Endothelial cell of umbilical vein (primary cell): ENCODE measurements at regions of chr19 and their contacts with region 1.

Region 1: DNA sequence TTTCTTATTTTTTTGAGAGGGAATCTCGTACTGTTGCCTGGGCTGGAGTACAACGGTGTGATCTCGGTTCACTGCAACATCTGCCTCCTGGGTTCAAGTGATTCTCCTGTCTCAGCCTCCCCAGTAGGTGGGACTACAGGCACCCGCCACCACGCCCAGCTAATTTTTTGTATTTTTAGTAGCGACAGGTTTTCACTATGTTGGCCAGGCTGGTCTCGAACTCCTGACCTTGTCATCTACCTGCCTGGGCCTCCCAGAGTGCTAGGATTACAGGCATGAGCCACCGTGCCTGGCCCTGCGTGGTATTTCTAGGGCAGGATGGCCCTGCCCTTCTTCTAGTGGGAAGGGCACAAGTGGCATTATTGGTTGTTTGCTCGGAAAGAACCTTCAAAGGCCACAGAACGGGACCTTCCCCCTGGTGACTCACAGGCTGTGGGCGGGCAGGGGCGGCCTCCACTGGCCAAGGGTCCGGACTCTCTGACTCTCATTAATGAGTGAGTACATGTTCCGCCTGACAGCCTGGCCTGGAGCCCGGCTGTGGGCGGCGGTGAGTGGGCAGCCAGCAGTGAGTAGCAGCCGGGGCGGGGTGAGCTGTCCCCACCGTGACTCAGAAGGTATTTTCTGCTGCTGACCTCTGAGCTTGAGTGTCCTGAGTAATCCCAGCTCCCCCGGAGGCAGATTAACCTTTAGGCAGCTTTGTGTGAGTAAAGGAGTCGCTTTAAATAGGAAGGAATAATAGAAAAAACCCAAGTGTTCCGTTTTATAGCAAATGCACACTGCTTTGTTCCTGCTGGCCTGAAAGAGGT is 5.1 kb downstream of the DOT1L start:
- DNase-seq: peak; percentile 99
- H3K4me3 ChIP-seq: no peak overlapping the region
- H3K27ac ChIP-seq: peak overlapping the region; percentile 85
- H3K4me1 ChIP-seq: peaks cover 39% of the 10 kb centered on the region
- H3K27me3 ChIP-seq: no peaks in the 10 kb centered on the region
- CTCF ChIP-seq: no peak
- POLR2A ChIP-seq: no peak

Region 2: GRCh38 chr19:2186071-2186846 is 17.4 kb after region 1 on chr19:
- CTCF ChIA-PET with region 1: interaction called, 5 read pairs
- POLR2A ChIA-PET with region 1: no interaction called
- dilution Hi-C with region 1: no loop called
- intact Hi-C with region 1: loop called (anchors 1 kb)
- DNase-seq: peak; percentile 84
- H3K4me3 ChIP-seq: no peak overlapping the region
- H3K27ac ChIP-seq: peak overlapping the region; percentile 13
- H3K4me1 ChIP-seq: peaks cover 10% of the 10 kb centered on the region
- H3K27me3 ChIP-seq: no peaks in the 10 kb centered on the region
- CTCF ChIP-seq: no peak
- POLR2A ChIP-seq: no peak

Region 3: GRCh38 chr19:2207991-2208860 is 39.4 kb after region 1 on chr19:
- CTCF ChIA-PET with region 1: no interaction called
- POLR2A ChIA-PET with region 1: no interaction called
- dilution Hi-C with region 1: no loop called
- intact Hi-C with region 1: loop called (anchors 5 kb)
- DNase-seq: peak; percentile 53
- H3K4me3 ChIP-seq: no peak overlapping the region
- H3K27ac ChIP-seq: no peak overlapping the region
- H3K4me1 ChIP-seq: peaks cover 7% of the 10 kb centered on the region
- H3K27me3 ChIP-seq: no peaks in the 10 kb centered on the region
- CTCF ChIP-seq: peak in 1 of 2 donors; percentile 44
- POLR2A ChIP-seq: no peak

Region 4: DNA sequence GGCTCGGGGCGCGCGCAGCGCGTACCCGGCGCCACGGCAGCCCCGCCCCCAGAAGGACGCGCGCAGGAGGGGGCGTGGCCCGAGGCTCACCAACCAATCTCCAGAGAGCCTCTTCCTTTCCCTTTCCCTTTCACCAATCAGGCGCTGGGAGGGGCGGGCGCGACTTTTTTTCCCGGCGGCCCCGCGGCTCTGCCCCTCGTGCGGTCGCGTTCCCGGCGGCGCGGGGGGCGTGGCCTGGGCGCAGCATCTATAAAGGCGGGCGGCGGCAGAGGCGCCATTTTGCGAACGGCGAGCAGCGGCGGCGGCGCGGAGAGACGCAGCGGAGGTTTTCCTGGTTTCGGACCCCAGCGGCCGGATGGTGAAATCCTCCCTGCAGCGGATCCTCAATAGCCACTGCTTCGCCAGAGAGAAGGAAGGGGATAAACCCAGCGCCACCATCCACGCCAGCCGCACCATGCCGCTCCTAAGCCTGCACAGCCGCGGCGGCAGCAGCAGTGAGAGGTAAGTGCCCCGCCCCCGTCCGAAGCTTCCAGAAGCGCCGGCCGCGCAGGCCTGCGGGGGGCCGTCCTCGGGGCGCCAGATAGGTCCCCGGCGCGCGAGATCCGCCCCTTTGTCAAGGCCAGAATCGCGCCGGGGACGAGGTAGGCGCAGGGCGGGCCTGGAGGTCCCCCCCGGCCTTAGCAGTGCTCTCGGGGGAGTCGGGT is 100.6 kb after region 1 on chr19:
- CTCF ChIA-PET with region 1: no interaction called
- POLR2A ChIA-PET with region 1: no interaction called
- dilution Hi-C with region 1: no loop called
- intact Hi-C with region 1: loop called (anchors 1 kb)
- DNase-seq: peak; percentile 95
- H3K4me3 ChIP-seq: peak overlapping the region; percentile 66 to 95 (median 92)
- H3K27ac ChIP-seq: peak overlapping the region; percentile 57
- H3K4me1 ChIP-seq: peaks cover 38% of the 10 kb centered on the region
- H3K27me3 ChIP-seq: no peaks in the 10 kb centered on the region
- CTCF ChIP-seq: no peak
- POLR2A ChIP-seq: peak; percentile 99